CD4-positive, alpha-beta memory T cell (primary cell): ENCODE measurements at regions of chr1 and their contacts with region 1.

Region 1: GRCh38 chr1:13748610-13749505 is 48.9 kb downstream of the PRDM2 start:
- DNase-seq: peak; percentile 96 to 97 (median 96)
- H3K4me3 ChIP-seq: peak overlapping the region; percentile 61 to 77
- H3K4me3 Mint-ChIP-seq: peak overlapping the region; percentile 88 to 97 (median 92)
- H3K27ac ChIP-seq: peak overlapping the region; percentile 84
- H3K27ac Mint-ChIP-seq: peak overlapping the region; percentile 96 to 98 (median 98)
- H3K4me1 ChIP-seq: peaks cover 50% of the 10 kb centered on the region
- H3K4me1 Mint-ChIP-seq: peaks cover 37 to 64% (median 46%) of the 10 kb centered on the region in 4 donors
- H3K27me3 ChIP-seq: no peaks in the 10 kb centered on the region
- H3K27me3 Mint-ChIP-seq: no peaks in the 10 kb centered on the region

Region 2: GRCh38 chr1:13699936-13700520 is 48.8 kb before region 1 on chr1 and contains the start of gene PRDM2:
- CTCF ChIA-PET with region 1: no interaction called
- POLR2A ChIA-PET with region 1: interaction called, 61 read pairs
- intact Hi-C with region 1: loop called (anchors 1 kb)
- DNase-seq: peak; percentile 55 to 78 (median 74)
- H3K4me3 ChIP-seq: peak within 1 kb of the TSS; percentile 87 to 90
- H3K4me3 Mint-ChIP-seq: peak within 1 kb of the TSS; percentile 95 to 99 (median 98)
- H3K27ac ChIP-seq: peak within 1 kb of the TSS; percentile 92
- H3K27ac Mint-ChIP-seq: peak within 1 kb of the TSS; percentile 98 to 100 (median 100)
- H3K4me1 ChIP-seq: peaks cover 44% of the 10 kb centered on the region
- H3K4me1 Mint-ChIP-seq: peaks cover 37 to 60% (median 43%) of the 10 kb centered on the region in 4 donors
- H3K27me3 ChIP-seq: no peaks in the 10 kb centered on the region
- H3K27me3 Mint-ChIP-seq: peaks cover 0 to 4% of the 10 kb centered on the region in 2 donors
- total RNA-seq, gene PRDM2: 113 to 118 TPM

Region 3: GRCh38 chr1:13730751-13731482 is 17.9 kb before region 1 on chr1:
- CTCF ChIA-PET with region 1: interaction called, 30 read pairs
- POLR2A ChIA-PET with region 1: interaction called, 188 read pairs
- intact Hi-C with region 1: loop called (anchors 1 kb)
- DNase-seq: peak; percentile 85 to 97 (median 92)
- H3K4me3 ChIP-seq: peak overlapping the region in 1 of 2 donors; percentile 47
- H3K4me3 Mint-ChIP-seq: peak overlapping the region; percentile 73 to 89 (median 84)
- H3K27ac ChIP-seq: peak overlapping the region; percentile 81
- H3K27ac Mint-ChIP-seq: peak overlapping the region; percentile 92 to 100 (median 99)
- H3K4me1 ChIP-seq: peaks cover 62% of the 10 kb centered on the region
- H3K4me1 Mint-ChIP-seq: peaks cover 54 to 93% (median 67%) of the 10 kb centered on the region in 4 donors
- H3K27me3 ChIP-seq: no peaks in the 10 kb centered on the region
- H3K27me3 Mint-ChIP-seq: no peaks in the 10 kb centered on the region

Region 4: DNA sequence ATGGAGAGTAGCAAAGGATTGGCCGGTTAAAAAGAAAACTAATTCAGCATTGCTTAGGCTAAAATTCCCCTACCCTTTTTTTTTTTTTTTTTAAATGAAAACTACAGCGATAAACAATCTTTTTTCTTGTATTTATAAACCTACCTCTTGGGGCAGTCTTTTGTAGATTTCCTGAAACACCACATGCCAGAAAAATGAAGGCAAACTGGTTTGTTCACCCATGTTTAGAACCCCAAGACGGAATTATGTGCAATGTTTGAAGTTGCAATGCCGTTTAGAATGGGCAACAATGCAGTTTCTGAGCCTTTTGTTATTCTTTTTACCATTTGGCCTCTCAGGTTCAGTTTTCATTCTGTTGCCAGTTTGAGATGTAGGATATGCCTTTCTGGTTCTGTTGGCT is 10.2 kb after region 1 on chr1:
- CTCF ChIA-PET with region 1: interaction called, 4 read pairs
- POLR2A ChIA-PET with region 1: interaction called, 12 read pairs
- intact Hi-C with region 1: no loop called
- DNase-seq: peak in 2 of 5 donors; percentile 11 to 24
- H3K4me3 ChIP-seq: no peak overlapping the region
- H3K4me3 Mint-ChIP-seq: peak overlapping the region in 5 of 8 donors; percentile 29 to 55 (median 51)
- H3K27ac ChIP-seq: no peak overlapping the region
- H3K27ac Mint-ChIP-seq: peak overlapping the region in 4 of 7 donors; percentile 25 to 66 (median 51)
- H3K4me1 ChIP-seq: peaks cover 96% of the 10 kb centered on the region
- H3K4me1 Mint-ChIP-seq: peaks cover 70 to 97% (median 82%) of the 10 kb centered on the region in 4 donors
- H3K27me3 ChIP-seq: no peaks in the 10 kb centered on the region
- H3K27me3 Mint-ChIP-seq: no peaks in the 10 kb centered on the region